Caco-2 (cell line): ENCODE measurements at regions of chr3 and their contacts with region 1.

Region 1: DNA sequence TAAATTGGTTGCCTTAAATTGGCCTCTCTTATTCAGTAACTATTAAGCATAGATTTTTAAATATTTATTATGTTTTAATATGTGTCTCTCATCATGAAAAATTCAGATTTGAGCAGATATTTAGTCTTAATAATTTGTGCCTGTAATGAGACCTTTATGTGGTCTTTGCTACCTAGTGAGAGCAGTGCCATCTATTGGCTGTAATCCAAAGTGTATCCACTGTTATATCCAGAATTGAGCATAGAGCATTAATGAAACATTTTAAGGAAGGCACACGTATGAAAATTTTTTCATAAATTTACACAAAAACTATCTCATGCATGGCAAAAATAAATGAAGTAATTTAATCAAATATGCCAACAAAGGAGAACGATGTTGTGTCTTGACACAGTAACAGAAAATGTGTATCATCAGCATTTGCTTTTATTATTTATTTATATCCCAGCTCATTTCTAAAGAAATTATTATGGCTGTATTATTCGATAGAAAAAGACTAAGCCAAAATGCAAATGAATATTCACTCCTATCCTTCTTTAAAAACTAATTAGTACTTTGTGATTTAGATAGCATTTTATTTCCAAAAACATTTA is 203.5 kb downstream of the RSRC1 start:
- DNase-seq: peak in 1 of 2 experiments; percentile 22
- H3K4me3 ChIP-seq: no peak overlapping the region
- H3K4me3 Mint-ChIP-seq: no peak overlapping the region
- H3K27ac Mint-ChIP-seq: no peak overlapping the region
- H3K4me1 ChIP-seq: peaks cover 14% of the 10 kb centered on the region
- H3K4me1 Mint-ChIP-seq: peaks cover 11% of the 10 kb centered on the region
- H3K27me3 ChIP-seq: no peaks in the 10 kb centered on the region
- H3K27me3 Mint-ChIP-seq: no peaks in the 10 kb centered on the region
- CTCF ChIP-seq: peak; percentile 47 to 61

Region 2: DNA sequence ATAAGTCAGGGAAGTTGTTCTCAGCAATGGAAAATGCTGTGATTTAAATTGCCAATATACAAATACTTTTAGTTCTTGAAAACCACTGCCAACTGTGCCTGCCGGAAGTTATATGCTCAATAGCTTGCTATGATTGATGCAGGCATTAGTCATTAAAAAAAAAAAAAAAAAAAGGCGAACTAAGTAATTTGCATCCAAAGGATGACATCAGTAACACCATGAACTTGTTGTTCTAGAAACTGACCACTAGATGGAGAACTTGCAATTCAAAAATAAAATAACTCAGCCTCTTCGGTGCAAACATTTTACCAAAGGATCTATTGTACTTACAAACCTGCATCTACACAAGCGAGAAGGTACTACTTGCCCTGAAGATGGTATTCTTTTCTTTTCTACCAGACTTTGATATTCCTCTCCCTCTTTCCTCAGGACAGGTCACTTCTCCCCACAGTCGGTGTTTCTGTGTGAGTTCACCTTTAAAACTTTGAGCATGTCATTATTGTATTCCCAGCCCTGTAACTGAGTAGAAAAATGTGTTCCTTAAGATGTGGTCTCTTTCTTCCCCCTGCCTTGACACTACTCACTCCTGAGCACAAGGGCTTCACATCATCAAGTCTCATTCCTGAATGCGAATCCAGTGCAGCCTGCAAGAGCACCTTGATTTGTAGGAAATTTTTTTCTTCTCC is 695.2 kb before region 1 on chr3:
- CTCF ChIA-PET with region 1: no interaction called
- POLR2A ChIA-PET with region 1: no interaction called
- intact Hi-C with region 1: loop called (anchors 1 kb)
- DNase-seq: peak in 1 of 2 experiments; percentile 15
- H3K4me3 ChIP-seq: no peak overlapping the region
- H3K4me3 Mint-ChIP-seq: no peak overlapping the region
- H3K27ac Mint-ChIP-seq: no peak overlapping the region
- H3K4me1 ChIP-seq: no peaks in the 10 kb centered on the region
- H3K4me1 Mint-ChIP-seq: peaks cover 7% of the 10 kb centered on the region
- H3K27me3 ChIP-seq: no peaks in the 10 kb centered on the region; the same call in 1 of the 2 replicates
- H3K27me3 Mint-ChIP-seq: peaks cover 12% of the 10 kb centered on the region
- CTCF ChIP-seq: peak in 1 of 2 experiments; percentile 57

Region 3: DNA sequence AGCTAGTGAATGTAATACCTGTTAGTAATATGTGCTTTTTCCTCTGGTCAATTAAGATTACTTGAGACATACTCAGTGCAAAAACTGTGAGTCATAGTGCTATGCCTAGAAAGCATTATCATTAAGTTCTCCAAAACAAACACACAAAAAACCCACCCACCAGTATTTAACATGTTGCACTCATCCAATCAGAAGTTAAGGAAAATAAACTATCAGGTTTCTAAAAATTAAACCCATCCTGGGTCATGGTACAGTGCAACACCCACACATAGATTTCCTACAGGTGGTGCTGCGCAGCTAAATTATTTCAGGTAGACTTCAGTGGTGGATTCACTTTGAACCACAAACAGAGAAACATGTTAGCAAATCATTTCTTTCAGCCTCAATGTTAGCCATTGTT is 545.8 kb before region 1 on chr3:
- CTCF ChIA-PET with region 1: no interaction called
- POLR2A ChIA-PET with region 1: no interaction called
- intact Hi-C with region 1: loop called (anchors 10 kb)
- DNase-seq: no peak
- H3K4me3 ChIP-seq: no peak overlapping the region
- H3K4me3 Mint-ChIP-seq: no peak overlapping the region
- H3K27ac Mint-ChIP-seq: no peak overlapping the region
- H3K4me1 ChIP-seq: no peaks in the 10 kb centered on the region
- H3K4me1 Mint-ChIP-seq: no peaks in the 10 kb centered on the region
- H3K27me3 ChIP-seq: no peaks in the 10 kb centered on the region
- H3K27me3 Mint-ChIP-seq: peaks cover 2% of the 10 kb centered on the region
- CTCF ChIP-seq: no peak

Region 4: GRCh38 chr3:157865352-157866000 is 448.0 kb before region 1 on chr3:
- CTCF ChIA-PET with region 1: interaction called, 3 read pairs
- POLR2A ChIA-PET with region 1: no interaction called
- intact Hi-C with region 1: loop called (anchors 1 kb)
- DNase-seq: peak; percentile 53 to 74
- H3K4me3 ChIP-seq: no peak overlapping the region
- H3K4me3 Mint-ChIP-seq: no peak overlapping the region
- H3K27ac Mint-ChIP-seq: no peak overlapping the region
- H3K4me1 ChIP-seq: no peaks in the 10 kb centered on the region
- H3K4me1 Mint-ChIP-seq: no peaks in the 10 kb centered on the region
- H3K27me3 ChIP-seq: no peaks in the 10 kb centered on the region
- H3K27me3 Mint-ChIP-seq: peaks cover 4% of the 10 kb centered on the region
- CTCF ChIP-seq: peak; percentile 74 to 85

Region 5: GRCh38 chr3:158091531-158091930 is 221.9 kb before region 1 on chr3:
- CTCF ChIA-PET with region 1: no interaction called
- POLR2A ChIA-PET with region 1: no interaction called
- intact Hi-C with region 1: loop called (anchors 1 kb)
- DNase-seq: no peak
- H3K4me3 ChIP-seq: no peak overlapping the region
- H3K4me3 Mint-ChIP-seq: no peak overlapping the region
- H3K27ac Mint-ChIP-seq: no peak overlapping the region
- H3K4me1 ChIP-seq: no peaks in the 10 kb centered on the region
- H3K4me1 Mint-ChIP-seq: no peaks in the 10 kb centered on the region
- H3K27me3 ChIP-seq: no peaks in the 10 kb centered on the region
- H3K27me3 Mint-ChIP-seq: no peaks in the 10 kb centered on the region
- CTCF ChIP-seq: peak in 1 of 2 experiments; percentile 31

Region 6: DNA sequence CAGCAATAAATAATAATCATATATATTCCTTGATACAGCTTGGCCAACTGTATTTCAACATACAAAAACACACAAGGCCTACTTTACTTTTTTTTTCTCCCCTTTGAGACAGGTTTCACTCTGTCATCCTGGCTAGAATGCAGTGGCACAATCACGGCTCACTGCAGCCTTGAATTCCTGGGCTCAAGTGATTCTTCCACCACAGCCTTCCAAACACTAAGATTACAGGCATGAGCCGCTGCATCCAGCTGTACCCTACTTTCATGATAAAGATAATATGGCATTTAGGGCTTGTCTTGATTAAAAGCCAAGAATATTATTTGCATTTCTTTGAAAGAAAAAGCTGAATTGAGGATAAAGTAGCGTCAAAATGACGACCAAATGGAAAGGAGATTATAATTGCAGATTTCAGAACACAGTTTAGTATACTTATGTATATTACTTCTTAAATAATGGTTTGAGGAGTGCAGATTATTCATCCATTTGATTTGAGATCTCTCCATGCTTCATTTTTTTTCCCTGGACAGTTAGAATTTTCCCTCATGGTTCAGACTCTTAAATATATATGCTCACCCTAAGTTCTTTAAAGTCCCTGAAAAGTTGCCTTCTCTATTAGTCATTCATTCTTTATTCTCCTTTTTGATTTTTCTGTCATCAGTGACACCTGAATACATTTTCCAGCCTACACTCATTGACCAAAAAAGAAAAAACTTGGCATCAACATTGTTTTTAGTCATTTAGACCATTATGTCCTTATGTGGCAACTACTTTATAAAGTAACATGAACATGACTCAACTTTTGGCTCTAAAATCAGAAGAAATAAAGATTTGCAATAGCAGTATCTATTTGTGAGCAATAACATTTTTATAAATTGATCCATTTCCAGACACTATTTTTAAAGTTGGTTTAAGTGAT is 209.0 kb after region 1 on chr3:
- CTCF ChIA-PET with region 1: no interaction called
- POLR2A ChIA-PET with region 1: no interaction called
- intact Hi-C with region 1: no loop called
- DNase-seq: no peak
- H3K4me3 ChIP-seq: no peak overlapping the region
- H3K4me3 Mint-ChIP-seq: no peak overlapping the region
- H3K27ac Mint-ChIP-seq: no peak overlapping the region
- H3K4me1 ChIP-seq: no peaks in the 10 kb centered on the region
- H3K4me1 Mint-ChIP-seq: no peaks in the 10 kb centered on the region
- H3K27me3 ChIP-seq: no peaks in the 10 kb centered on the region
- H3K27me3 Mint-ChIP-seq: no peaks in the 10 kb centered on the region
- CTCF ChIP-seq: no peak

Region 7: DNA sequence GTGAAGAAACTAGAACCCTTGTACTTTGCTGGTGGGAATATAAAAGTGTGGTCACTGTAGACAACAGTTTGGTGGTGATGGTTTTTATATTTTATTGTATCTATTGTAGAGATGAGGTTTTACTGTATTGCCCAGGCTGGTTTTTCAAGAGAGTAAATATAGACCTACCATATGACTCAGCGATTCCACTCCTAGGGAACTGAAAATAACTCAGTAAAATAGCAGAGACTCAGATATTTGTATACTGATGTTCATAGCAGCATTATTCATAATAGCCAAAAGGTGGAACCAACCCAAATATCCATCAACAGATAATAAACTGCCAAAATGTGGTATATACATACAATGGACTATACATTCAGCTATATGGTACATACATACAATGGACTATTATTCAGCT is 1606.4 kb after region 1 on chr3:
- CTCF ChIA-PET with region 1: no interaction called
- POLR2A ChIA-PET with region 1: no interaction called
- intact Hi-C with region 1: no loop called
- DNase-seq: no peak
- H3K4me3 ChIP-seq: no peak overlapping the region
- H3K4me3 Mint-ChIP-seq: no peak overlapping the region
- H3K27ac Mint-ChIP-seq: no peak overlapping the region
- H3K4me1 ChIP-seq: no peaks in the 10 kb centered on the region
- H3K4me1 Mint-ChIP-seq: no peaks in the 10 kb centered on the region
- H3K27me3 ChIP-seq: no peaks in the 10 kb centered on the region
- H3K27me3 Mint-ChIP-seq: no peaks in the 10 kb centered on the region
- CTCF ChIP-seq: no peak